T-cell (primary cell): ENCODE measurements at regions of chr4 and their contacts with region 1.

Region 1: GRCh38 chr4:10273030-10273429 is 156.4 kb upstream of the WDR1 start:
- DNase-seq: no peak
- ATAC-seq: no peak
- H3K4me3 ChIP-seq: no peak overlapping the region
- H3K4me3 Mint-ChIP-seq: no peak overlapping the region
- H3K27ac ChIP-seq: no peak overlapping the region
- H3K27ac Mint-ChIP-seq: no peak overlapping the region
- H3K4me1 ChIP-seq: no peaks in the 10 kb centered on the region
- H3K4me1 Mint-ChIP-seq: no peaks in the 10 kb centered on the region
- H3K27me3 ChIP-seq: no peaks in the 10 kb centered on the region
- H3K27me3 Mint-ChIP-seq: no peaks in the 10 kb centered on the region

Region 2: DNA sequence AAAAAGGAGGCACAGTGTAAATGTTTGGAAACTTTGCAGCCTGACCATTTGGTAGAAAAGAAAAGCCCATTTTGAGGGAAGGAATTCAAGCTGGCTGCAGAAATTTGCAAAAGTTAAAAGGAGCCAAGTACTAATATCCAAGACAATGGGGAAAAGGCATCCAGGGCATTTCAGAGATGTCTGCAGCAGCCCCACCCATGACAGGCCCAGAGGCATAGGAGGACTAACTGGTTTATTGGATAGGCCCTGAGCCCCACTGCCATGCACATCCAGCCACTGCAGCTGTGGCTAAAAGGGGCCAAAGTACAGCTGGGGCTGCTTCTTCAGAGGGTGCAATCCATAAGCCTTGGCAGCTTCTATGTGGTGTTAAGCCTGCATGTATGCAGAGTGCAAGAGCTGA is 1050.7 kb after region 1 on chr4:
- CTCF ChIA-PET with region 1: interaction called in 1 of 2 experiments, 11 read pairs
- POLR2A ChIA-PET with region 1: no interaction called
- DNase-seq: no peak
- ATAC-seq: no peak
- H3K4me3 ChIP-seq: no peak overlapping the region
- H3K4me3 Mint-ChIP-seq: no peak overlapping the region
- H3K27ac ChIP-seq: no peak overlapping the region
- H3K27ac Mint-ChIP-seq: no peak overlapping the region
- H3K4me1 ChIP-seq: no peaks in the 10 kb centered on the region
- H3K4me1 Mint-ChIP-seq: no peaks in the 10 kb centered on the region
- H3K27me3 ChIP-seq: no peaks in the 10 kb centered on the region
- H3K27me3 Mint-ChIP-seq: peaks cover 0 to 3% of the 10 kb centered on the region in 2 donors